ENCODE measurements at regions of chr6 and their contacts with region 1.

Region 1: GRCh38 chr6:112415400-112415799 is 68.3 kb downstream of the RFPL4B start:
- DNase-seq: no peak
- H3K4me3 Mint-ChIP-seq: no peak overlapping the region
- H3K27ac Mint-ChIP-seq: no peak overlapping the region
- H3K4me1 Mint-ChIP-seq: no peaks in the 10 kb centered on the region
- H3K27me3 Mint-ChIP-seq: peaks cover 7% of the 10 kb centered on the region

Region 2: GRCh38 chr6:112429226-112429625 is 13.8 kb after region 1 on chr6:
- CTCF ChIA-PET with region 1: interaction called, 3 read pairs
- POLR2A ChIA-PET with region 1: interaction called, 10 read pairs
- DNase-seq: no peak
- H3K4me3 Mint-ChIP-seq: no peak overlapping the region
- H3K27ac Mint-ChIP-seq: no peak overlapping the region
- H3K4me1 Mint-ChIP-seq: no peaks in the 10 kb centered on the region
- H3K27me3 Mint-ChIP-seq: no peaks in the 10 kb centered on the region

Region 3: GRCh38 chr6:112466373-112467151 is 51.2 kb after region 1 on chr6:
- CTCF ChIA-PET with region 1: no interaction called
- POLR2A ChIA-PET with region 1: no interaction called
- DNase-seq: no peak
- H3K4me3 Mint-ChIP-seq: no peak overlapping the region
- H3K27ac Mint-ChIP-seq: no peak overlapping the region
- H3K4me1 Mint-ChIP-seq: no peaks in the 10 kb centered on the region
- H3K27me3 Mint-ChIP-seq: no peaks in the 10 kb centered on the region

Measured in activated CD4-positive, alpha-beta T cell treated with anti-CD3 and anti-CD28 coated beads, Interleukin-2, amount 10 ng/mL, durations not matched to agents 7 days and 5 days (primary cell).